ENCODE measurements at regions of chr11 and their contacts with region 1.

Region 1: GRCh38 chr11:35617687-35618496 is at the start of gene FJX1:
- DNase-seq: no peak
- H3K4me3 Mint-ChIP-seq: peak within 1 kb of the TSS; percentile 58
- H3K27ac Mint-ChIP-seq: no peak within 1 kb of the TSS
- H3K4me1 Mint-ChIP-seq: peaks cover 6% of the 10 kb centered on the region
- H3K27me3 Mint-ChIP-seq: peaks cover 57% of the 10 kb centered on the region
- total RNA-seq, gene FJX1: 0.09 TPM in 2 replicates

Region 2: GRCh38 chr11:35822815-35823495 is 205.1 kb after region 1 on chr11:
- intact Hi-C with region 1: loop called (anchors 1 kb)
- DNase-seq: no peak
- H3K4me3 Mint-ChIP-seq: no peak overlapping the region
- H3K27ac Mint-ChIP-seq: no peak overlapping the region
- H3K4me1 Mint-ChIP-seq: peaks cover 6% of the 10 kb centered on the region
- H3K27me3 Mint-ChIP-seq: no peaks in the 10 kb centered on the region

Region 3: DNA sequence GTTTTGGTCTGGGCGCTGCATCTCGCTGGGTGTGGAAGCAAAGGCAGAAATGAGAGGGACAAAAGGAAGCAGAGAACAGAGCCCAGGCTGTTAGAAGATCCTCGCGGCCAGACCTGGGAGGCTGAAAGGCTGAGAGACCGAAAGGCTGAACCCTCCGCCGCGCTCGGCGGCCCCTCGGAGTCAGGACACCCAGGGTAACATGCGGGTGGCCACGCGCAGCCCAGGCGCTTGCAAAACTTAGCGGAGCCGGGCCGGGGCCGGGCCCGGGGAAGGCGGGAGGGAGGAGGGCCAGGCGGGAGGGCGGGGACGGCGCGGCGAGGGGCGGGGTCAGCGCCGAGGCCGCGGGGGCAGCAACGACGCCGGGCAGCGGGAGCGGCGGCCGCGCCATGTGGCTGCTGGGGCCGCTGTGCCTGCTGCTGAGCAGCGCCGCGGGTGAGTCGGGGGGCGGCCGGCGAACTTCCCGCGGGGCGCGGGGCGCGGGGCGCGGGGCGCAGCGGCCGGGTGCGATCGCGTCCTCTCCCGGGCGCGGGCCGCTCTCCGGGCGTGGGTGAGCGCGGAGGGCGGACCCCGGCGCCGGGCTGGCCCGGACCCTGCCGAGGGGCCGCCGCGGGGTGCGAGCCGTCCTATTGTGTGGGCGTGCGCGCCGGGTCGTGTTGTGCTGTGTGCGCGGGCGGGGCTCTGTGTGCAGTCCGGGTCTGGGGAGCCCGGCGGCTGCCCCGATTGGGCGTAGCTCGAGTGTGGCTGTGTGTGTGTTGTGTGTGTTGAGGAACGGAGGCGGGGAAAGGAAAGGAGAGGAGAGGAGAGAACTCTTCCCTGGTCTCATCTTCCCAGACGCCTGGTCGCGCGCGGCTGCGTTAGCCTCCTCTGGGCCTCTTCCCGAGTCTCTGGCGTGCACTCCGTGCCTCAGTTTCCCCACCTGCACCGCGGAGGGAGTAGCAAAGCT is 326.1 kb after region 1 on chr11 and contains the start of gene LDLRAD3:
- intact Hi-C with region 1: loop called (anchors 10 kb)
- DNase-seq: peak; percentile 9
- H3K4me3 Mint-ChIP-seq: peak within 1 kb of the TSS; percentile 82
- H3K27ac Mint-ChIP-seq: peak within 1 kb of the TSS; percentile 14
- H3K4me1 Mint-ChIP-seq: peaks cover 8% of the 10 kb centered on the region
- H3K27me3 Mint-ChIP-seq: peaks cover 53% of the 10 kb centered on the region
- total RNA-seq, gene LDLRAD3: 0.76 and 1.4 TPM in 2 replicates

Region 4: GRCh38 chr11:36041988-36042611 is 424.2 kb after region 1 on chr11:
- intact Hi-C with region 1: loop called (anchors 10 kb)
- DNase-seq: no peak
- H3K4me3 Mint-ChIP-seq: no peak overlapping the region
- H3K27ac Mint-ChIP-seq: no peak overlapping the region
- H3K4me1 Mint-ChIP-seq: peaks cover 7% of the 10 kb centered on the region
- H3K27me3 Mint-ChIP-seq: peaks cover 5% of the 10 kb centered on the region

Region 5: GRCh38 chr11:36149538-36150242 is 531.8 kb after region 1 on chr11:
- intact Hi-C with region 1: loop called (anchors 2 kb)
- DNase-seq: peak; percentile 22
- H3K4me3 Mint-ChIP-seq: no peak overlapping the region
- H3K27ac Mint-ChIP-seq: no peak overlapping the region
- H3K4me1 Mint-ChIP-seq: peaks cover 14% of the 10 kb centered on the region
- H3K27me3 Mint-ChIP-seq: peaks cover 2% of the 10 kb centered on the region

Region 6: GRCh38 chr11:36258730-36259360 is 641.0 kb after region 1 on chr11:
- intact Hi-C with region 1: loop called (anchors 2 kb)
- DNase-seq: no peak
- H3K4me3 Mint-ChIP-seq: no peak overlapping the region
- H3K27ac Mint-ChIP-seq: no peak overlapping the region
- H3K4me1 Mint-ChIP-seq: no peaks in the 10 kb centered on the region
- H3K27me3 Mint-ChIP-seq: peaks cover 8% of the 10 kb centered on the region

Region 7: GRCh38 chr11:36265793-36266628 is 648.1 kb after region 1 on chr11:
- intact Hi-C with region 1: loop called (anchors 1 kb)
- DNase-seq: peak; percentile 29
- H3K4me3 Mint-ChIP-seq: no peak overlapping the region
- H3K27ac Mint-ChIP-seq: no peak overlapping the region
- H3K4me1 Mint-ChIP-seq: no peaks in the 10 kb centered on the region
- H3K27me3 Mint-ChIP-seq: no peaks in the 10 kb centered on the region

Measured in activated T-helper 2 cell treated with anti-CD3 and anti-CD28 coated beads, Interferon-gamma antibody, Interleukin-2, Interleukin-4, amounts not matched to agents 10 μg/mL and 5 μg/mL and 100 μg/mL, durations not matched to agents 14 hours and 24 hours and 36 hours (primary cell).